ENCODE measurements at regions of chr2 and their contacts with region 1.

Region 1: GRCh38 chr2:183495589-183496267 is 371.5 kb downstream of the NUP35 start:
- DNase-seq: peak; percentile 32
- ATAC-seq: peak; percentile 99
- H3K4me3 ChIP-seq: no peak overlapping the region
- H3K27ac ChIP-seq: no peak overlapping the region
- H3K4me1 ChIP-seq: no peaks in the 10 kb centered on the region; the same call in 1 of the 2 replicates
- H3K27me3 ChIP-seq: no peaks in the 10 kb centered on the region
- CTCF ChIP-seq: no peak
- EP300 ChIP-seq: no peak
- POLR2A ChIP-seq: no peak
- RAD21 ChIP-seq: no peak

Region 2: GRCh38 chr2:183093857-183094657 is 401.7 kb before region 1 on chr2:
- CTCF ChIA-PET with region 1: no interaction called
- POLR2A ChIA-PET with region 1: no interaction called
- RAD21 ChIA-PET with region 1: no interaction called
- SMC1A ChIA-PET with region 1: no interaction called
- in situ Hi-C with region 1: no loop called
- intact Hi-C with region 1: no loop called
- DNase-seq: peak; percentile 26
- ATAC-seq: peak; percentile 75
- H3K4me3 ChIP-seq: no peak overlapping the region
- H3K27ac ChIP-seq: no peak overlapping the region
- H3K4me1 ChIP-seq: peaks cover 19% of the 10 kb centered on the region; the same call in 1 of the 2 replicates
- H3K27me3 ChIP-seq: no peaks in the 10 kb centered on the region
- CTCF ChIP-seq: peak in 2 of 3 experiments; percentile 24 to 34; a peak in 3 of 6 replicates
- EP300 ChIP-seq: no peak; a peak in 1 of 4 replicates
- POLR2A ChIP-seq: no peak
- RAD21 ChIP-seq: peak; percentile 43

Region 3: DNA sequence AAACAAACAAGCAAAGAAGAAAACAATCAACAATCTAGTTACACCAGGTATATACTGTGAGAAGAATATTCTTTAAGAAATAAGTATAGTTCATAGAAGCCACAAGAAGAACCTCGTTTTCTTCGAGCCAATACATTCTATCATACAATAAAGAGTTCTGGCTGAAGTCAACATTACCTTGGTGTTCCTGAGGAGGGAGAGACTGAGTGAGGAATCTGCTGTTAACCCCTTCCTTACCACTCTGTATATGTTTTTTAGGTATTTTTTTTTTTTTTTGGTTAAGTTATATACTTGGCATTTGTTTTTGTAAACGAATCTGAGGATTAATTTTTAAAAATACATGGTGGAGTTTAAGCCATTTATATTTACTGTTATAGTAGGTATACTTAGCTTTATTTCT is 41.0 kb after region 1 on chr2:
- CTCF ChIA-PET with region 1: no interaction called
- POLR2A ChIA-PET with region 1: no interaction called
- RAD21 ChIA-PET with region 1: no interaction called
- SMC1A ChIA-PET with region 1: no interaction called
- in situ Hi-C with region 1: no loop called
- intact Hi-C with region 1: loop called (anchors 5 kb)
- DNase-seq: no peak
- ATAC-seq: no peak
- H3K4me3 ChIP-seq: no peak overlapping the region
- H3K27ac ChIP-seq: no peak overlapping the region
- H3K4me1 ChIP-seq: no peaks in the 10 kb centered on the region
- H3K27me3 ChIP-seq: no peaks in the 10 kb centered on the region; a peak in 1 of 4 replicates
- CTCF ChIP-seq: no peak
- EP300 ChIP-seq: no peak
- POLR2A ChIP-seq: no peak
- RAD21 ChIP-seq: no peak

Region 4: GRCh38 chr2:183564726-183565125 is 69.0 kb after region 1 on chr2:
- CTCF ChIA-PET with region 1: no interaction called
- POLR2A ChIA-PET with region 1: no interaction called
- RAD21 ChIA-PET with region 1: no interaction called
- SMC1A ChIA-PET with region 1: no interaction called
- in situ Hi-C with region 1: no loop called
- intact Hi-C with region 1: loop called (anchors 2 kb)
- DNase-seq: no peak
- ATAC-seq: peak; percentile 53
- H3K4me3 ChIP-seq: no peak overlapping the region
- H3K27ac ChIP-seq: no peak overlapping the region
- H3K4me1 ChIP-seq: no peaks in the 10 kb centered on the region
- H3K27me3 ChIP-seq: no peaks in the 10 kb centered on the region
- CTCF ChIP-seq: no peak
- EP300 ChIP-seq: no peak
- POLR2A ChIP-seq: no peak
- RAD21 ChIP-seq: no peak

Region 5: DNA sequence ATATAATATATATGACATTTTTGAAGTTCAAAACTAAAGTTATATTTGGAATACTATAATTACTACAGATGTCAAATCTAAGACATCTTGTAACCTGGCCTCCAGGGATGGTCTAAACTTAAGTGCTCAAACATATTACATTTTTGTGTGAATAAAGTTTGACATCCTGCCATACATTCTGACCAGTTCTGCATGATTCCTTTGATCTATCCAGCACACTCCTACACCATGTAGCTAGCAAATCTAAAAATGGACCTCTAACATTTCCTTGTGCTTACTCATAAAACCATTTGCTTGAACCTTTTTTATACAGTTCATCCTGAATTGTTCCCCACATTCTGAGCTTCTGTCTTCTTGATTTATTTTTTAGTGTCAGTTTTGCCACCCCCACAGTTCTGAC is 808.3 kb after region 1 on chr2:
- CTCF ChIA-PET with region 1: no interaction called
- POLR2A ChIA-PET with region 1: no interaction called
- RAD21 ChIA-PET with region 1: no interaction called
- SMC1A ChIA-PET with region 1: no interaction called
- in situ Hi-C with region 1: no loop called
- intact Hi-C with region 1: no loop called
- DNase-seq: no peak
- ATAC-seq: no peak
- H3K4me3 ChIP-seq: no peak overlapping the region
- H3K27ac ChIP-seq: no peak overlapping the region
- H3K4me1 ChIP-seq: no peaks in the 10 kb centered on the region
- H3K27me3 ChIP-seq: no peaks in the 10 kb centered on the region
- CTCF ChIP-seq: no peak
- EP300 ChIP-seq: no peak
- POLR2A ChIP-seq: no peak
- RAD21 ChIP-seq: no peak

Measured in GM12878 (cell line).